Naive thymus-derived CD4-positive, alpha-beta T cell (primary cell): ENCODE measurements at regions of chr5 and their contacts with region 1.

Region 1: DNA sequence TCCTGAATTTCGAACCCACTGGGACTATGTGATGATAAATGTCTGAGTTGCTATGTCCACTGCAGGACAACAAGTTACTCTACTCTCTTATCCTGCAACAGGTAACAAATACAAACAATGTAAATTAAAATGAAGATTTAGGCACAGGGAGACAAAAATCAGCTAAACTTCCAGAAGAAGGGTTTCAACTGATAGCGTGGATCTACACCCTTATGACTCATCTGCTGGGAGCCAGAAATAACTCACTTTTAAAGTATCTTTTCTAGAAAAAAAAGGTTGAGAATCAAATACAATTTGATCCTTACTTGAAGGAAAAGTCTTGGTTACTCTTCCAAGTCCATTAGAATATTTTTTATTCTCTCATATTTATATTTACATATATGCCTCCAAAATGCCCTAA is 21.4 kb downstream of the PJA2 start:
- DNase-seq: no peak
- ATAC-seq: no peak
- H3K4me3 ChIP-seq: no peak overlapping the region
- H3K4me3 Mint-ChIP-seq: peak overlapping the region in 3 of 10 donors; percentile 5 to 47 (median 17)
- H3K27ac ChIP-seq: no peak overlapping the region
- H3K27ac Mint-ChIP-seq: peak overlapping the region in 2 of 9 donors; percentile 37 to 43
- H3K4me1 ChIP-seq: peaks cover 5 to 7% of the 10 kb centered on the region in 2 donors
- H3K4me1 Mint-ChIP-seq: peaks cover 28 to 93% (median 88%) of the 10 kb centered on the region in 7 donors
- H3K27me3 ChIP-seq: no peaks in the 10 kb centered on the region
- H3K27me3 Mint-ChIP-seq: no peaks in the 10 kb centered on the region

Region 2: DNA sequence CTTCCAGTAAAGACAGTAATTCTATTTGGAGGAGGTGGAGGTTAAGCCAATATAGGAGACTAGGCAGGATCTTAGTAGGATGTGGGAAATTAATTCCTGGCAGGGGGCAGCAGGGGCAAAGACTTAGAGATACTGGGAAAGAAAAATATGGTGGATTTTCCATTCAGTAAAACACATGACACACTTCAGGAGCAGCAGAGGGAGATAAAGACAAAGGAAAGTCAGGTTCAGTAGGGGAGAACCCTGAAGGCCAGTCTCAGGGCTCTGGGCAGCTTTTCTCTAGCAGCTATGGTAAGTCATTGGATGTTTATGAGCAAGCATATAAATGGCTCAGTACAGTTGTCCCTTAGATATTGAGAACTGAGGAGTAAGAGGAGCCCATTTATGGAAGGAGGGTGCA is 84.1 kb before region 1 on chr5:
- CTCF ChIA-PET with region 1: no interaction called
- POLR2A ChIA-PET with region 1: no interaction called
- intact Hi-C with region 1: no loop called
- DNase-seq: no peak
- ATAC-seq: no peak
- H3K4me3 ChIP-seq: no peak overlapping the region
- H3K4me3 Mint-ChIP-seq: no peak overlapping the region
- H3K27ac ChIP-seq: no peak overlapping the region
- H3K27ac Mint-ChIP-seq: no peak overlapping the region
- H3K4me1 ChIP-seq: no peaks in the 10 kb centered on the region
- H3K4me1 Mint-ChIP-seq: no peaks in the 10 kb centered on the region
- H3K27me3 ChIP-seq: no peaks in the 10 kb centered on the region
- H3K27me3 Mint-ChIP-seq: no peaks in the 10 kb centered on the region

Region 3: GRCh38 chr5:109374625-109375024 is 13.8 kb before region 1 on chr5:
- CTCF ChIA-PET with region 1: interaction called, 4 read pairs
- POLR2A ChIA-PET with region 1: interaction called, 4 read pairs
- intact Hi-C with region 1: loop called in 1 of 2 experiments (anchors 1 kb)
- DNase-seq: peak in 3 of 9 donors; percentile 5 to 13 (median 9)
- ATAC-seq: no peak
- H3K4me3 ChIP-seq: no peak overlapping the region
- H3K4me3 Mint-ChIP-seq: no peak overlapping the region
- H3K27ac ChIP-seq: no peak overlapping the region
- H3K27ac Mint-ChIP-seq: peak overlapping the region in 3 of 9 donors; percentile 45 to 58 (median 45)
- H3K4me1 ChIP-seq: peaks cover 0 to 3% of the 10 kb centered on the region in 2 donors
- H3K4me1 Mint-ChIP-seq: peaks cover 20 to 82% (median 71%) of the 10 kb centered on the region in 7 donors
- H3K27me3 ChIP-seq: no peaks in the 10 kb centered on the region
- H3K27me3 Mint-ChIP-seq: no peaks in the 10 kb centered on the region